PC-3 (cell line): ENCODE measurements at regions of chr3 and their contacts with region 1.

Region 1: GRCh38 chr3:151168269-151169094 is 34.5 kb downstream of the GPR171 start:
- DNase-seq: peak; percentile 87
- ATAC-seq: peak; percentile 97
- H3K4me3 ChIP-seq: no peak overlapping the region
- H3K27ac ChIP-seq: no peak overlapping the region
- H3K4me1 ChIP-seq: no peaks in the 10 kb centered on the region
- H3K27me3 ChIP-seq: no peaks in the 10 kb centered on the region
- CTCF ChIP-seq: peak; percentile 93

Region 2: GRCh38 chr3:151124476-151124875 is 44.0 kb before region 1 on chr3:
- CTCF ChIA-PET with region 1: no interaction called
- POLR2A ChIA-PET with region 1: no interaction called
- intact Hi-C with region 1: no loop called
- DNase-seq: peak; percentile 71
- ATAC-seq: peak; percentile 99
- H3K4me3 ChIP-seq: no peak overlapping the region
- H3K27ac ChIP-seq: no peak overlapping the region
- H3K4me1 ChIP-seq: peaks cover 14% of the 10 kb centered on the region
- H3K27me3 ChIP-seq: peaks cover 22% of the 10 kb centered on the region
- CTCF ChIP-seq: no peak

Region 3: DNA sequence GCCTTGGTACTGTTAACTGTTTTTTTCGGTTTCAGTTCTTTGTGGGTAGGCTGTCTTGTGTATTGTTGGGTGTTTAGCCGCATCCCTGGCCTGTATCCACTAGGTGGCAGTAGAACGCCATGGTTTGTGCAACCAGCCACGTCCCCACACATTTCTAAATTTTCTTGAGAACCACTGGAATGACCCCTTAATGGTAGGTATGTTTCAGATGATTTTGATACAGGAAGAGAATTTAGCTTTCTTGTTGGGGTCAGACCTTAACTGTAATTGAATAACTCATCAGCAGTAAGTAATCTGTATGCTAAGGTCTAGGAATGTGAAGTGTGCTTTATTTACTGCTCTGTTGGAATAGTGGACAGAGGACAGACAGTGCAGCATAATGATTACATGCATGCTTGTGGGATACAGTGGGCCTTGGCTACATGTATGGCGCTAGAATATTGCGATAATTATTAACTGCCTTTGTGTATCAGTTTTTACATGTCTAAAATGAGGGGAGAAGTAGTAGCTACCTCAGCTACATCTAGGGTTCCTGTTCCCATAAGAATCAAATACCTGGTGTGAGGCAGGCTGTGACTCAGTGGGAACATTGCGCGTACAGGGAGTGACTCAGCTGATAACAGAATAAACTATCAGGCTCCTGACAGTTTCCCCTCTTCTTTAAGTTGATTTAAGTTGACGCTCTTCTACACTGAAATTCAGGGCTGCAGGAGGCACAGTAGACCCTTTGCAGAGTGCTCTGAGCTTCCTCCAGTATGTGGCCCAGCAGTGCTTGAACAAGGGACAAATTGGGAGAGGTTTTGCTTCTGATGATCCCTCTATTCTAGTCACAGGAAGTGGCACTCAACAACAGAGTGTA is 59.6 kb after region 1 on chr3:
- CTCF ChIA-PET with region 1: interaction called, 4 read pairs
- POLR2A ChIA-PET with region 1: no interaction called
- intact Hi-C with region 1: loop called (anchors 1 kb)
- DNase-seq: peak; percentile 81
- ATAC-seq: peak; percentile 82
- H3K4me3 ChIP-seq: no peak overlapping the region
- H3K27ac ChIP-seq: peak overlapping the region; percentile 63
- H3K4me1 ChIP-seq: peaks cover 31% of the 10 kb centered on the region
- H3K27me3 ChIP-seq: no peaks in the 10 kb centered on the region
- CTCF ChIP-seq: peak; percentile 97

Region 4: GRCh38 chr3:151282921-151283320 is 114.4 kb after region 1 on chr3:
- CTCF ChIA-PET with region 1: no interaction called
- POLR2A ChIA-PET with region 1: no interaction called
- intact Hi-C with region 1: loop called (anchors 1 kb)
- DNase-seq: peak; percentile 64
- ATAC-seq: peak; percentile 51
- H3K4me3 ChIP-seq: no peak overlapping the region
- H3K27ac ChIP-seq: peak overlapping the region; percentile 2; the same call in 1 of the 2 replicates
- H3K4me1 ChIP-seq: peaks cover 18% of the 10 kb centered on the region
- H3K27me3 ChIP-seq: no peaks in the 10 kb centered on the region
- CTCF ChIP-seq: peak; percentile 82

Region 5: DNA sequence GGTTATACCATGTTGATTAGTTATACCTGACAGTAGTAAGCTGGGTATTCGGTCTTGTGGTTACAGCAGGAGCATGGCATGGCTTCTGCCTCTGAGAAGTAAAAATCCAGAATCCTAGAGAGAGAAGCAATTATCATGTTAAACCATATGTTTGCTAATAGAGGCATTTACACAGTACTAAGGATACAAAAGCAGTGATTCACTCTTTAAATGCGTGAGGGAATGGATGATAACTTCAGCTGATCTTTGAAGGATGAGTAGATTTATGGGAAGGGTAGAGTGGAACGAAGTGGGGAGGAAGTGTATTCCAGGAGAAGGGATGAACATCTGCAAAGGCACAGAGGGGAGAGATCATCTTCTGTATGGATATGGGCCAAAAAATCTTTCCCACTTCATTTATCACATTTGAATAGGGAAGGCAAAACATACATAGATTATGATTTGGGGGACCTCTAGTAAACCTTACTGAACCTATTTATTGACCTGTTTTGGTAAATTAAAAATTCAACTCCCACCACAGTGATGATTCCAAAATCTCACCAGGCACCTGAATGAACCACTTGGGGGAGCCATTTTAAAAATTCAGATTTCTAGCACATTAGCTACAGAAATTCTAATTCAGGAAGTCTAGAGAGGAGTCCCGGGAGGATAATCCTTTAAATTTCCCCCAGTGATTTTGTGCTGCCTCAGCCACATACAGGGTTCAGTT is 257.3 kb after region 1 on chr3:
- CTCF ChIA-PET with region 1: no interaction called
- POLR2A ChIA-PET with region 1: interaction called, 3 read pairs
- intact Hi-C with region 1: loop called (anchors 10 kb)
- DNase-seq: no peak
- ATAC-seq: peak; percentile 58
- H3K4me3 ChIP-seq: no peak overlapping the region
- H3K27ac ChIP-seq: no peak overlapping the region
- H3K4me1 ChIP-seq: peaks cover 15% of the 10 kb centered on the region
- H3K27me3 ChIP-seq: no peaks in the 10 kb centered on the region
- CTCF ChIP-seq: peak; percentile 76